MCF 10A (cell line): ENCODE measurements at regions of chr5 and their contacts with region 1.

Region 1: DNA sequence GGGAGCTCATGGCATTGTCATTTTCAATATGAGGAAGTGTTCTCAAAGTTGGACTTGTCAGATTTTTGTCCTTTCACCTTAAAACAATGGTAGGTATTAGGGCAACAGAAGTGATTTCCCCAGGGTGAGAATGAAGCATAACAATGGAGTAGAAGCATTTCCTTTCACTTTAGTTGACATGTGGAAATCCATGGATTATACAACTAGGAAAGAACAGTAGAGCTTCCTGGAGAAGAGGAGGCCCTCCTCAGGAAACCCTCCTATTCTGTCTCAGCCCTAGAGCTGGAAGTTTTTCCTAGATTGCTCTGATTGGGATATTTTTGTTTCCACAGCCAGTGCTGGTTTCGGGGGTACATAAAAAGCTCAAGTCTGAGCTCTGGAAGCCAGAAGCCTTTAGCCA is 13.8 kb upstream of the REEP2 start:
- DNase-seq: no peak
- H3K4me3 Mint-ChIP-seq: no peak overlapping the region
- H3K27ac Mint-ChIP-seq: no peak overlapping the region
- H3K4me1 Mint-ChIP-seq: peaks cover 6% of the 10 kb centered on the region
- H3K27me3 Mint-ChIP-seq: no peaks in the 10 kb centered on the region
- CTCF ChIP-seq: no peak

Region 2: DNA sequence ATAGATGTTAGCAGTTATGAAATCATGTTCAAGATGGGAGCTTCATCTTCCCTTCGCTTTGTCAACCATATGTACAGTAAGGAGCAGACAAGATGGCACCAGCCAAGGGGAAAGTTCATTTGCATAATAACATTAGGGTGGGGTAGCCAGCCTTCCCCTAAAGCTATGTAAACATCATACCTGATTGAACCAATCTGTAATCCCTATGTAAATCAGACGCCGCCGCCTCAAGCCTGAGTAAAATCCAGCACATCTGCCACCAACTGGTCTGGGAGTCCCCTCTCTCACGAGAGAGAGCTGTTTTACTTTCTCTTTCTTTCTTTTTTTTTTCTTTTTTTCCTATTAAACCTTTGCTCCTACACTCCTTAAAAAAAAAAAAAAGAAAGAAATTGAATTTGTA is 17.1 kb before region 1 on chr5:
- CTCF ChIA-PET with region 1: interaction called, 13 read pairs
- POLR2A ChIA-PET with region 1: no interaction called
- intact Hi-C with region 1: no loop called
- DNase-seq: no peak
- H3K4me3 Mint-ChIP-seq: no peak overlapping the region
- H3K27ac Mint-ChIP-seq: no peak overlapping the region
- H3K4me1 Mint-ChIP-seq: peaks cover 5% of the 10 kb centered on the region
- H3K27me3 Mint-ChIP-seq: no peaks in the 10 kb centered on the region
- CTCF ChIP-seq: no peak